Heart right ventricle (tissue), 16 donors: ENCODE measurements at regions of chr2 and their contacts with region 1.

Region 1: GRCh38 chr2:225002039-225002655 is 40.1 kb downstream of the DOCK10 start:
- DNase-seq: peak in 1 of 2 donors; percentile 53
- ATAC-seq: peak in 5 of 8 donors; percentile 28 to 61 (median 42)
- H3K4me3 ChIP-seq: no peak overlapping the region
- H3K27ac ChIP-seq: peak overlapping the region in 1 of 10 donors; percentile 26
- H3K4me1 ChIP-seq: peaks cover 0 to 13% (median 0%) of the 10 kb centered on the region in 9 donors
- H3K27me3 ChIP-seq: no peaks in the 10 kb centered on the region
- CTCF ChIP-seq: peak; percentile 26 to 74 (median 60)

Region 2: DNA sequence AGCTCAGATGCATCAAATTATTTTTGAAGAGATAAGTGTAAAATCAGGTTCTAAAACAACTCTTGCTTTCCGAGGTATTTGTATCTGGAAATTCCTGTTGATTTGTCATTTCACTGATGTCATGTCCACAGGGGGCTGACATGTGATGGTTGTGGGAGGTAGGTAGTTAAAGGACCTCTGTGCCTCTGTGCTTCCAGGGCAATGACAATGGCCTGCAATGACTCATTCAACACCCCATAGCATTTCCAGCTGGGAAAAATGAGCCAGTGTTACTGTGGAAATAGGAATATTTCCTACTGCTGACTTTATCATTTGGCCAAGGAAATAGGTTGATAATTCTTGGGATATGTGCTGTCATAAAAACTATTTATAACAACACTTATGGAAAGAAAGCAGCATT is 199.7 kb before region 1 on chr2:
- intact Hi-C with region 1: loop called in 1 of 10 experiments (anchors 10 kb)
- DNase-seq: no peak
- ATAC-seq: peak in 3 of 8 donors; percentile 55 to 75 (median 57)
- H3K4me3 ChIP-seq: no peak overlapping the region
- H3K27ac ChIP-seq: no peak overlapping the region
- H3K4me1 ChIP-seq: peaks cover 0 to 2% (median 0%) of the 10 kb centered on the region in 9 donors
- H3K27me3 ChIP-seq: no peaks in the 10 kb centered on the region
- CTCF ChIP-seq: no peak